Tibial artery (tissue), 4 donors: ENCODE measurements at regions of chr20 and their contacts with region 1.

Region 1: DNA sequence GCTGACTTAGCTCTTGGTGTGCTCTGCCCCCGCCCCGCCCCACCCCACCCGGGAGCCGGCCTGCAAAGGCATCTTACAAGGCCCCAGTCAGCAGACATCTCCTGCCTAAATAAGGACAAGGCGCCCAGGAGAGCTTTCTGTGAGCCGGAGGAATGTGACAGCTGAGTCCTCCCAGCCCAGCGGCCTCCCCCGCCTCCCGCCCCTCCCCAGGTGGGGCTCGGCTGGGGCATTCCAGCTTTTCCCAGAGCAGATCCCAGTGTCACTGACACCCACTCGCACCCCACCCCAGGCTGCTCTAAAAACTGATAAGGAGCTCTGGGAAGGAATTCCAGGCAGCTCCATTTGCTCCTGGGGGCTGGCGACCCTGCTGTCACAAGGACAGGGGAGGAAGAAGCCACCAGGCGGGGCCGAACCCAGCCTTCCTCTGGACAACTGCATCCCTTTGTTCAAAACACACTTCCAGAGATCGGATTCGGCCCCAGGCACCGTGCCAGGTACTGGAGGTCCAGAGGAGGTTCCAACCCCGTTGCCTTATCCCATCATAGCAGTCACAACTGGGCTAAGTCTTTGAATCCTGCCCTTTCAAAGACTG is 49.7 kb downstream of the JPH2 start:
- DNase-seq: peak; percentile 45 to 83
- H3K4me3 ChIP-seq: peak overlapping the region in 1 of 2 donors; percentile 30
- H3K27ac ChIP-seq: peak overlapping the region; percentile 92 to 94
- H3K4me1 ChIP-seq: peaks cover 0 to 84% (median 47%) of the 10 kb centered on the region in 4 donors
- H3K27me3 ChIP-seq: no peaks in the 10 kb centered on the region
- CTCF ChIP-seq: no peak

Region 2: GRCh38 chr20:44104798-44105517 is 32.3 kb before region 1 on chr20:
- intact Hi-C with region 1: no loop called
- DNase-seq: no peak
- H3K4me3 ChIP-seq: no peak overlapping the region
- H3K27ac ChIP-seq: no peak overlapping the region
- H3K4me1 ChIP-seq: peaks cover 0 to 10% (median 3%) of the 10 kb centered on the region in 4 donors
- H3K27me3 ChIP-seq: no peaks in the 10 kb centered on the region
- CTCF ChIP-seq: no peak

Region 3: DNA sequence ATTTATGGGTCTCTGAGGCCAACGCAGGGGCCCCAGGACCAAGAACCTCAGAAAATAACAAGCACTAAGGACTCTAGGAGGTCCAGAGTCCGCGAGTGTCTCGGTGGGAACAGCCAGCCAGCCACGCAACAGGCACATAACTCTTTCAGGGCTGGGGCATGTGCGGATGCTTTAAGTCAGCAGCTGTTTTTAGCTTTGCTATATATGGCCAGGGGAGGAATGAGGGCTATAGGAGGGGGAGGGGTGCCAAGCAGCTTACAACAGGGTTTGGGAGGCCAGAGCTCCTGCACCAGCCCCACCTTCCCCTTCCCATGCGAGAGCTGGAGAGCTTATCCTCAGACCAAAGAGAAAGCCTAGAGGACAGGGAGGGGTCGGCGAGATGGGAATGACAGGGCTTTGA is 43.5 kb after region 1 on chr20:
- intact Hi-C with region 1: loop called (anchors 5 kb)
- DNase-seq: peak; percentile 68 to 92
- H3K4me3 ChIP-seq: peak overlapping the region; percentile 73 to 88
- H3K27ac ChIP-seq: peak overlapping the region; percentile 93 to 95
- H3K4me1 ChIP-seq: peaks cover 0 to 82% (median 42%) of the 10 kb centered on the region in 4 donors
- H3K27me3 ChIP-seq: no peaks in the 10 kb centered on the region
- CTCF ChIP-seq: no peak